ENCODE measurements at regions of chr10 and their contacts with region 1.

Region 1: GRCh38 chr10:89369156-89370105 is 8.4 kb upstream of the IFIT1B start:
- DNase-seq: no peak
- H3K4me3 ChIP-seq: no peak overlapping the region
- H3K27ac ChIP-seq: no peak overlapping the region
- H3K4me1 ChIP-seq: peaks cover 6 to 39% (median 15%) of the 10 kb centered on the region in 4 donors
- H3K27me3 ChIP-seq: no peaks in the 10 kb centered on the region
- CTCF ChIP-seq: peak; percentile 31 to 48 (median 40)
- EP300 ChIP-seq: no peak
- POLR2A ChIP-seq: no peak

Region 2: DNA sequence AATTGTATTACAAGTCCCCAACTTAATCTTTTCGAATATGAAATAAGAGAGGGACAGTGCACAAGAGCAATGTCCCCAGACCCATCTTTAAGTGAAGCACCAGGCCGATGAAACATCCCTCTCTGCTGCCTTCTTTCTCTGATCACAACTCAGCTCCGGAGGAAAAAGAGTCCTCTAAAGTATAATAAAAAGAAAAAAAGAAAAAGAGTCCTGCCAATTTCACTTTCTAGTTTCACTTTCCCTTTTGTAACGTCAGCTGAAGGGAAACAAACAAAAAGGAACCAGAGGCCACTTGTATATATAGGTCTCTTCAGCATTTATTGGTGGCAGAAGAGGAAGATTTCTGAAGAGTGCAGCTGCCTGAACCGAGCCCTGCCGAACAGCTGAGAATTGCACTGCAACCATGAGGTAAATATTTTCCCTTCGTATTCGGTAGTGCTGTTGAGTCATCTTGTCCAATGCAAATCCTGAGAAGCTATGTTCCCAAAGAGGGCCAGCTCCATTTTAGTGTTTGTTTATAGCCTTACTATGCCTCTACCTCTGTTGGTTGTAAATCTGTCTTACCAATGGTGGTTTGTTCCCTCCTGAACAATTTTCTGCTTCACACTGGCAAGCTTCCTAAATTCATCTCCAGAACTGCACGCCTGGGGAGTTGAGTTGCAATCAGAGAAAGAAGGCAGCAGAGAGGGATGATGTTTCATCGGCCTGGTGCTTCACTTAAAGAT is 67.5 kb before region 1 on chr10 and contains the start of gene IFIT2:
- in situ Hi-C with region 1: no loop called
- intact Hi-C with region 1: loop called (anchors 5 kb)
- DNase-seq: peak; percentile 47
- H3K4me3 ChIP-seq: peak within 1 kb of the TSS; percentile 14 to 60 (median 36)
- H3K27ac ChIP-seq: peak within 1 kb of the TSS; percentile 86 to 92 (median 90)
- H3K4me1 ChIP-seq: peaks cover 20 to 46% (median 30%) of the 10 kb centered on the region in 4 donors
- H3K27me3 ChIP-seq: no peaks in the 10 kb centered on the region
- CTCF ChIP-seq: peak in 1 of 5 experiments; percentile 19
- EP300 ChIP-seq: no peak
- POLR2A ChIP-seq: peak; percentile 74
- total RNA-seq, gene IFIT2: 0.20 to 7.0 (median 2.3) TPM

Measured in transverse colon (tissue), 4 donors.